ENCODE measurements at regions of chr22 and their contacts with region 1.

Region 1: DNA sequence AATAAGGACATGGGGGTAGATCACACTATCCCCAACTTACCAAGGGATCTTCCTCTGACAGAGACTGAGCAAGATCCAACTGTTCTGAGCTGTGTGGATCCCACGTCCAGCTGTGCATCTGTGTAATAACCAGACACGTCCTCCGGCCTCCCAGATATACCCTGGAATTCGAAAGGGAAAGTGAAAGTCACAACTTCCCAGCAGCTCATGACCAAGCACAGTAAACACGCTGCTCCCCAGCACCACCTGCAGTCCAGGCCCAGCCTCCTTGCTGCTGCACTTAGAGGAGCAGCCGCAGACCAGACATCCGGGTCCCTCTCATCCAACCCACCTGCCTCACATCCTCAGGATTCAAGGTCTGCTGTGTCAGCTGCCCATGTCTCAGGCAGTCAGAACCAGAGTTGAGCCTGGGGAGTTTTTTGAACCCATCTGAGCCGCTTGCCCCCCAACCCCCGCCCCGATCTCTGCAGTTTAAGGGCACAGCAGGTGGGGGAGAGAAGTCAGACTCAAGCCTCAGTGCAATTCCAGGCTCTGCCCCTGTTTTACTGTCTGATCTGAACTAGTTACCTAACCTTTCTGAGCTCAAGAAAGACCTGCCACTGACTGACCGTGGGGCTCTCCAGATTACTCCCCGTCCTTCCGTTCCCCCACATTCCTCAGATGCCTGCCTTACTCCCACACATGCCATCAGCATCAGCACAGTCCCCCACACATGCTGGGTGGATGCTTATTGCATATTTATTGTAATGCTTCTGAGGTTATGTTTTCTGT is at the start of gene APOL2:
- DNase-seq: peak; percentile 86 to 91
- H3K4me3 ChIP-seq: peak within 1 kb of the TSS; percentile 70
- H3K27ac ChIP-seq: peak within 1 kb of the TSS; percentile 48
- H3K4me1 ChIP-seq: peaks cover 21% of the 10 kb centered on the region
- H3K27me3 ChIP-seq: no peaks in the 10 kb centered on the region
- CTCF ChIP-seq: peak; percentile 74
- total RNA-seq, gene APOL2: 19.9 and 27.4 TPM in 2 replicates

Region 2: GRCh38 chr22:36201630-36202319 is 37.8 kb before region 1 on chr22 and contains the start of gene APOL4:
- CTCF ChIA-PET with region 1: interaction called, 15 read pairs
- POLR2A ChIA-PET with region 1: no interaction called
- intact Hi-C with region 1: loop called (anchors 5 kb)
- DNase-seq: no peak
- H3K4me3 ChIP-seq: peak within 1 kb of the TSS; percentile 36; the same call in 1 of the 2 replicates
- H3K27ac ChIP-seq: peak within 1 kb of the TSS; percentile 34; the same call in 1 of the 2 replicates
- H3K4me1 ChIP-seq: peaks cover 21% of the 10 kb centered on the region
- H3K27me3 ChIP-seq: no peaks in the 10 kb centered on the region
- CTCF ChIP-seq: no peak
- total RNA-seq, gene APOL4: not detected in 2 replicates

Region 3: DNA sequence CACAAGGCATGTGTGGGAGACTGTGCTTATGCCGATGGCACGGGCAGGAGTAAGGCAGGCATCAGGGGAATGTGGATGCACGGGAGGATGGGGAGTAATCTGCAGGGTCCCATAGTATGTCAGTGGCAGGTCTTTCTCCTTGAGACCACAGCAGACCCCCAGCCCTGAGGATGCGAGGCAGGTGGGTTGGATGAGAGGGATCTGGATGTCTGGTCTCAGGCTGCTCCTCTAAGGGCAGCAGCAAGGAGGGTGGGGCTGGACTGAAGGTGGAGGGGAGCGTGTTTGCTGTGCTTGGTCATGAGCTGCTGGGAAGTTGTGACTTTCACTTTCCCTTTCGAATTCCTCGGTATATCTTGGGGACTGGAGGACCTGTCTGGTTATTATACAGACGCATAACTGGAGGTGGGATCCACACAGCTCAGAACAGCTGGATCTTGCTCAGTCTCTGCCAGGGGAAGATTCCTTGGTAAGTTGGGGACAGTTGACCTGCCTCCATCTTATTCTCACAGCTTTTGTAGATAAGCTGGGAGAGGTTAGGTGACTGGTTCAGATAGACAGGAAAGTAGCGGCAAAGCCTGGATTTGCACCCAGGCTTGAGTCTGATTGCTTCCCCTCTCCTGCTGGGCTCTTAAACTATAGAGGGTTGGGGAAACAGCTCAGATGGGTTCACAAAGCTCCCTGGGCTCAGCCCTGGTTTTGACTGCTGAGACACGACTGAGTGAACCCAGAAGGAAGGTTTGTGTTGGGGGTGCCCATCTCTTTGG is 13.3 kb after region 1 on chr22 and contains the start of gene APOL1:
- CTCF ChIA-PET with region 1: interaction called, 4 read pairs
- POLR2A ChIA-PET with region 1: interaction called, 7 read pairs
- intact Hi-C with region 1: loop called (anchors 1 kb)
- DNase-seq: peak in 1 of 2 experiments; percentile 55
- H3K4me3 ChIP-seq: peak within 1 kb of the TSS; percentile 8; the same call in 1 of the 2 replicates
- H3K27ac ChIP-seq: no peak within 1 kb of the TSS
- H3K4me1 ChIP-seq: peaks cover 7% of the 10 kb centered on the region
- H3K27me3 ChIP-seq: no peaks in the 10 kb centered on the region
- CTCF ChIP-seq: no peak
- total RNA-seq, gene APOL1: 27.0 and 33.0 TPM in 2 replicates

Region 4: DNA sequence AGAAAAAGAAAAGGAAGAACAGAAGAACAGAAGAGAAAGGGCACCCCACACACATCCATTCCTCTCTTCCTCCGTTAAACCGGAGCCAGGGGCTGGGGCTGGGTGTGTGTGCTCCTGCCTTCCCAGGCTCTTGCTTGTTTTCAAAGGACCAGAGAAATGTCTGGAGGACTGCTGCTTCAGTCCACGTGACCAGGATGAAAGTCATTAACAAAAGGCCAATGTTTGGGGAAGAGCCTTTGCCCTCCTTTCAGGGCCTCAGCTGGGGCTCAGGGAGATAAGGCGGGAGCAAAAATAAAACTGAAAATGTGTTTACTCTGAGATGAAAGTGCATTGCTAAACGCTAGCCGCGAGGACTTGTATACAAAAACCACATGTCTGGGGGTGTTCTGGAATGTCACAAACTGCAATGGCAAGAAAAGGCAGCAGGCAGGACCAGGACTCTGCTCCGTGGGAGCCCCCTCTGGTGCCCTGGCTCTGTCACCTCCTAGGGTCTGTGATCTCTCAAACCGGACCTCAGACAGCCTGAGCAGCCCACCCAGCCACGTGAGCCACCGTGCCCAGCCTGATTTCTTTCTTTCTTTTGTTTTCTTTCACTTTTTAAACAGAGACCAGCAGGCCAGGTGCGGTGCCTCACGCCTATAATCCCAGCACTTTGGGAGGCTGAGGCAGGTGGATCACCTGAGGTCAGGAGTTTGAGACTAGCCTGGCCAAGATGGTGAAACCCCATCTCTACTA is 179.8 kb after region 1 on chr22:
- CTCF ChIA-PET with region 1: no interaction called
- POLR2A ChIA-PET with region 1: no interaction called
- intact Hi-C with region 1: no loop called
- DNase-seq: peak; percentile 44 to 93
- H3K4me3 ChIP-seq: peak overlapping the region; percentile 35; the same call in 1 of the 2 replicates
- H3K27ac ChIP-seq: peak overlapping the region; percentile 66
- H3K4me1 ChIP-seq: peaks cover 43% of the 10 kb centered on the region
- H3K27me3 ChIP-seq: no peaks in the 10 kb centered on the region
- CTCF ChIP-seq: no peak

Measured in PC-9 (cell line).